ENCODE measurements at regions of chr12 and their contacts with region 1.

Region 1: GRCh38 chr12:14803011-14803829 is at the starts of genes C12orf60 and WBP11:
- DNase-seq: peak; percentile 98
- H3K4me3 ChIP-seq: peak within 1 kb of the TSS; percentile 77
- H3K27ac ChIP-seq: peak within 1 kb of the TSS; percentile 66
- H3K4me1 ChIP-seq: peaks cover 36% of the 10 kb centered on the region
- CTCF ChIP-seq: no peak
- total RNA-seq, gene C12orf60: 2.8 and 3.2 TPM in 2 replicates
- total RNA-seq, gene WBP11: 16.5 and 22.8 TPM in 2 replicates

Region 2: GRCh38 chr12:14473707-14474287 is 329.4 kb before region 1 on chr12:
- CTCF ChIA-PET with region 1: no interaction called
- POLR2A ChIA-PET with region 1: no interaction called
- intact Hi-C with region 1: no loop called
- DNase-seq: peak; percentile 55
- H3K4me3 ChIP-seq: no peak overlapping the region
- H3K27ac ChIP-seq: no peak overlapping the region
- H3K4me1 ChIP-seq: no peaks in the 10 kb centered on the region
- CTCF ChIP-seq: no peak

Region 3: GRCh38 chr12:14741153-14741552 is 62.1 kb before region 1 on chr12:
- CTCF ChIA-PET with region 1: no interaction called
- POLR2A ChIA-PET with region 1: no interaction called
- intact Hi-C with region 1: no loop called
- DNase-seq: peak; percentile 42
- H3K4me3 ChIP-seq: no peak overlapping the region
- H3K27ac ChIP-seq: no peak overlapping the region
- H3K4me1 ChIP-seq: peaks cover 10% of the 10 kb centered on the region
- CTCF ChIP-seq: no peak

Region 4: GRCh38 chr12:14782756-14783155 is 20.5 kb before region 1 on chr12:
- CTCF ChIA-PET with region 1: no interaction called
- POLR2A ChIA-PET with region 1: interaction called, 162 read pairs
- intact Hi-C with region 1: no loop called
- DNase-seq: no peak
- H3K4me3 ChIP-seq: no peak overlapping the region
- H3K27ac ChIP-seq: no peak overlapping the region
- H3K4me1 ChIP-seq: peaks cover 5% of the 10 kb centered on the region
- CTCF ChIP-seq: no peak

Region 5: DNA sequence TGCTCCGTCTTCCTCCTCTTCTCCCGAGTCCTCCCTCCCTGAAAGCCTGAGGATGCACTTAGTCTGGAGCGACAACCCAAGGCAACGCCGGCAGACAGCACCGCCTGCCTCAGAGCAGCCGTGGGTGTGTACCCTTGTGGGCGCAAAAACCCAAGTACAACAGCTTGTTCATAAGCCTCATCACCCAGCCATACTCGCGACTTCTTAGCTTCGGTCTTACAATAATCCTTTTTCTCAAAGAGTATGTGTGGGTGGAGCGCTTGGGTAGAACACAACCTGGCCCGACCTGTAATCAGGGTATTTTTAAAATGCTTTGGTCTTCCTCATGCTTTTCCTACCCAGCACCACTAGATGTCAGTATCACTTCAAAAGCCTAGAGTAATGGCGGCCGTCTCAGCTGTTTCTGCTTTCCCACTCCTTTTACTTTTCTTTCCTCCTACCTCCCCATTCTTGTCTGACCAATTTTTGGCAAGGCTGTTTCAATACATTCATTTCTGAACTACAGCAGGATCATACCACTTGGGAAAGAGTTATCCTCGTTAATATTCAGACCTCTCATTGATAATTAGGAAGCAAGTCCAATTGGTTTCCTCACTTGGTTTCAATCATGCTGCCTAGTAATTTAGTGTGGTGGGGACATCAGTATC is 787.1 kb after region 1 on chr12:
- CTCF ChIA-PET with region 1: no interaction called
- POLR2A ChIA-PET with region 1: no interaction called
- intact Hi-C with region 1: no loop called
- DNase-seq: peak; percentile 73
- H3K4me3 ChIP-seq: no peak overlapping the region
- H3K27ac ChIP-seq: no peak overlapping the region
- H3K4me1 ChIP-seq: no peaks in the 10 kb centered on the region
- CTCF ChIP-seq: peak; percentile 92

Measured in OCI-LY7 (cell line).